Activated CD4-positive, alpha-beta memory T cell treated with anti-CD3 and anti-CD28 coated beads for 36 hours (primary cell): ENCODE measurements at regions of chr4 and their contacts with region 1.

Region 1: DNA sequence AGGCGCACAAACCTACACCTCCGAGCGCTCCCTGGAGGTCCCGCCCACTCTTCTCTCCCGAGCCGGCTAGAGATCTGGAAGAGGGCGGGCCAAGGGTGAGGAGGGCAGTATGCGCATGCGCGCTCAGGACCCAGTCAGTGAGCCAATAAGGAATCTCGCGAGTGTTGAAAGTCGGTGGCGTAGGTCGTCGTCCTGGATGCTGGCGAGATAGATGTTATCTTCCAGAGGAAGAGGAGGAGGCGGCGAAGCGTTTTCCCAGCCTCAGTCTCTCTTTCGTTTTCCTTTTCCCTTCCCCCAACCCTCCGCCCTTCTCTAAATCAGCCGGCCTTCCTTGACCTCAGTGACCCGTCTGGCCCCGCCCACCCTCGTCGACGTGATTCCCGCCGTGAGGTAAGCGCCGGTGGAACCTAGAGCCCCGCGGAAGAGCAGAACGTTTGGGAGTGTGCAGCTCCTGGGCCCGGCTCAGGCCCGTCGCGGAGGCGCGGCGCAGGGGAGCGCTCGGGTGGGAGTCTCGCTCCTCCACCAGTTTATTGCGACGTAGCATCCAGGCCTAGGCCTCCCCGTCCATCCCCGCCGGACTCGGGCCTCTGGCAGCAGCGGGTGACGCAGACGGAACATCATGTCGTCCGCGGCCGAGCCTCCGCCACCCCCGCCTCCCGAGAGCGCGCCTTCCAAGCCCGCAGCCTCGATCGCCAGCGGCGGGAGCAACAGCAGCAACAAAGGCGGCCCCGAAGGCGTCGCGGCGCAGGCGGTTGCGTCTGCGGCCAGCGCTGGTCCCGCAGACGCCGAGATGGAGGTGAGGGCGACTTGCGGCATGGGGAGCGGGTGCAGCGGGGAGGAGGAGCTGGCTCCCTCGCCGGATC is at the start of gene SMARCA5:
- DNase-seq: peak; percentile 97
- H3K4me3 Mint-ChIP-seq: peak within 1 kb of the TSS; percentile 97
- H3K27ac Mint-ChIP-seq: peak within 1 kb of the TSS; percentile 97
- H3K4me1 Mint-ChIP-seq: peaks cover 25% of the 10 kb centered on the region
- H3K27me3 Mint-ChIP-seq: no peaks in the 10 kb centered on the region
- total RNA-seq, gene SMARCA5: 67.0 to 69.3 TPM

Region 2: GRCh38 chr4:142282870-142283431 is 1230.6 kb before region 1 on chr4:
- CTCF ChIA-PET with region 1: no interaction called
- POLR2A ChIA-PET with region 1: no interaction called
- intact Hi-C with region 1: loop called (anchors 10 kb)
- DNase-seq: no peak
- H3K4me3 Mint-ChIP-seq: no peak overlapping the region
- H3K27ac Mint-ChIP-seq: no peak overlapping the region
- H3K4me1 Mint-ChIP-seq: peaks cover 26% of the 10 kb centered on the region
- H3K27me3 Mint-ChIP-seq: no peaks in the 10 kb centered on the region

Region 3: GRCh38 chr4:143184217-143185116 is 329.1 kb before region 1 on chr4 and contains the start of gene USP38:
- CTCF ChIA-PET with region 1: no interaction called
- POLR2A ChIA-PET with region 1: interaction called, 4 read pairs
- intact Hi-C with region 1: loop called (anchors 1 kb)
- DNase-seq: peak; percentile 96
- H3K4me3 Mint-ChIP-seq: peak within 1 kb of the TSS; percentile 87
- H3K27ac Mint-ChIP-seq: peak within 1 kb of the TSS; percentile 94
- H3K4me1 Mint-ChIP-seq: peaks cover 28% of the 10 kb centered on the region
- H3K27me3 Mint-ChIP-seq: no peaks in the 10 kb centered on the region
- total RNA-seq, gene USP38: 21.7 to 22.0 TPM

Region 4: DNA sequence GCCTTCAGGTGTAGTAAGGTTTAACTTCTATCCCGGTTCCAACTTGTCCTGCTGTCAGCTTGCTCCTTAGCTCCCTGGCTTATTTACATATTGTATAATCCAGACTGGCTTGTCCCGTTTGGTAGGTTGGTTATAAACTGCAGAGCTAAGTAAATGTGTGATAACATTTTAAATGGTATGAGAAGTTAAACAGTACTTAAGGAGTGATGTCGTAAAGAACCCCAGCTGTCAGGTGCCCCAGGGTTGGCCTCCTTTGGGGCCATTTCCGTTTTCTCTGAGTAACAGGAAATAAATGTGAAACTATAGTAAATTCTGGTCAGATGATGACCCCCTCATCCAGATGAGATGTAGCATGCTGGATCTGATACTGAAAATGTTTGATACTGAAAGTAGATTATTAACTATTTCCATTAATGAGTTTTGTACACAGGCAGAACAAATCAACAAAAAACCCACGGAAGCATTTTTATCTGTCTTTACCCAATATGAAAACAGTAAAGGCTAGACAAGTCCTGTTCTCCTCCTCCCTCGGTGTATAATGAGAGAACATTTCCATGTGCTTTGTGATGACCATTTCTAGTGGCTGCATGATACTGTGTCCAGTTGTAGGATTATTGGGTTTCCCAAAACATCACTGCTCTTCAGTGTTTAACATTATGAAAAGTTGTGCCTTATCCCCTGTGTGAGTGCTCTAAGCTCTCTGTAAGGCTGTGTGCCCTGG is 154.5 kb before region 1 on chr4:
- CTCF ChIA-PET with region 1: no interaction called
- POLR2A ChIA-PET with region 1: no interaction called
- intact Hi-C with region 1: loop called (anchors 1 kb)
- DNase-seq: peak; percentile 68
- H3K4me3 Mint-ChIP-seq: no peak overlapping the region
- H3K27ac Mint-ChIP-seq: peak overlapping the region; percentile 77
- H3K4me1 Mint-ChIP-seq: peaks cover 23% of the 10 kb centered on the region
- H3K27me3 Mint-ChIP-seq: no peaks in the 10 kb centered on the region

Region 5: DNA sequence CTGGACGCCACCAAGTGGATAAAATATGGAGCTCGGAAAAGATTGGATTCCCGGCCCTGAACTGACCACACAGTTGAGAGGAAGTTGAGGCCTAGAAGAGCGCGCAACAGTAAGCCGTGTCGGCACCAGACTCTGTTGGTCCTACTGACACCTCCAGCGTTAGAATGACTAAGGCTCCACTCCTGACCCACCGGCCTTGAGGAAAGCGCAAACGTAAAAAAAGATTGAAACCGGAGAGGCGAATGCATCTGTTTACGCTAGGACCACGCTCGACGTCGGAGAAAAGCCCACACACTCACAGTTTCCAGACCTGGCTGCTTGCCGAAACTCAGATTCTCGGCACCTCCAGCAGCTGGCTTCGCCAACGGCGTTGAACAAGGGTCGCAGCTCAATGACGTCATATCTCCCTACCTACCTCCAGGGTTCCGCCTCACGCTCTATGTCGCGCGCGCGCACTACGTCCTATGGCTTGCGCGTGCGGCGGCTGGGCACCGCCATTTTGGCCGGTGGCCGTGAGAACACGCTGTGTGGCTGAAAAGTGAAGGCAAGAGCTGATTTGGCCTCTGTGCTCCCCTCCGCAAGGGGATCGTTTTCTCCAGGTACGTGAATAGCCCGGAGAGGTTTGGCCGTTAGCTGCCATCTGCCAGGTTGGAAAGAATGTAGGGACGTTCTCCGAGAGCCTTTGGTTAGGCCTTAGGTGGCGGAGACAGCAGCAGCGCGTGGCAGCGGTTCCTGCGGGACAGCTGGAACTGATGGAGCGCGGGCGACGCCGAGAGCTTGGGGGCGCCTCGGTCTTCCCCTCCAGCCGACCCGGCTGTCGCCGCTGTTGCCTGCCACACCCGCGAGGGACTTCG is 1584.5 kb after region 1 on chr4 and contains the starts of genes ABCE1 and ANAPC10:
- CTCF ChIA-PET with region 1: no interaction called
- POLR2A ChIA-PET with region 1: no interaction called
- intact Hi-C with region 1: loop called (anchors 1 kb)
- DNase-seq: peak; percentile 97
- H3K4me3 Mint-ChIP-seq: peak within 1 kb of the TSS; percentile 87
- H3K27ac Mint-ChIP-seq: peak within 1 kb of the TSS; percentile 97
- H3K4me1 Mint-ChIP-seq: peaks cover 20% of the 10 kb centered on the region
- H3K27me3 Mint-ChIP-seq: no peaks in the 10 kb centered on the region
- total RNA-seq, gene ABCE1: 138 to 145 TPM
- total RNA-seq, gene ANAPC10: 28.2 to 28.3 TPM